Activated naive CD4-positive, alpha-beta T cell treated with anti-CD3 and anti-CD28 coated beads for 36 hours (primary cell): ENCODE measurements at regions of chr6 and their contacts with region 1.

Region 1: DNA sequence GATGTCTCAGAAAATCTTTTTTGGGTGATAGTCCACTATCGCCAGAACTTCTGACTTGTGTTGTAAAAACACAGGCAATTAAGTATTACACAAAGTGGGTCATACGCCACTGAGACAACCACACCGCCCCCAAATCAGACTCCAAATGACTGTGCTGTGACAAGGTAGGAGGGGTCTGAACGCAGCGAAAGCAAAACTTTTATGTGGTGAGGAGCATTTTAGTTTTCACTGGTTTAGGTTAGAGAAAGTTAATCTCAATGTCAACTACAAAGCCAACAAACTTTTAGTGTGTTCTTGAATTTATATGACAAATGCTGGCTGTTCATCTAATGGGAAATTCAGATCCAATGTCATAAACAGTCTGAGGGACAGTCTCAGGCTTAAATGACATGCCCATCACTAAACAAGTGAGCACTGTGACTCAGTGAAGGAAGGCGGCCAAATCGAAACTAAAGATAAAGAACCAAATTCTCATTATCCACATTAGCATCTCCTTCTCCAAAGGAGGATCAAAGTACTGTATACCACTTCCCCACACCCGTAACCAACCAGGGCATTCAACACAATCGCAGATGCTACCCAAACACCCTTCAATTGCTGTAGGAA is 186.7 kb downstream of the GJA10 start:
- DNase-seq: peak; percentile 94
- H3K4me3 Mint-ChIP-seq: peak overlapping the region; percentile 89
- H3K27ac Mint-ChIP-seq: peak overlapping the region; percentile 94
- H3K4me1 Mint-ChIP-seq: peaks cover 88% of the 10 kb centered on the region
- H3K27me3 Mint-ChIP-seq: no peaks in the 10 kb centered on the region

Region 2: GRCh38 chr6:89895276-89895874 is 185.6 kb before region 1 on chr6:
- CTCF ChIA-PET with region 1: no interaction called
- intact Hi-C with region 1: no loop called
- DNase-seq: peak; percentile 27
- H3K4me3 Mint-ChIP-seq: no peak overlapping the region
- H3K27ac Mint-ChIP-seq: no peak overlapping the region
- H3K4me1 Mint-ChIP-seq: no peaks in the 10 kb centered on the region
- H3K27me3 Mint-ChIP-seq: peaks cover 33% of the 10 kb centered on the region

Region 3: DNA sequence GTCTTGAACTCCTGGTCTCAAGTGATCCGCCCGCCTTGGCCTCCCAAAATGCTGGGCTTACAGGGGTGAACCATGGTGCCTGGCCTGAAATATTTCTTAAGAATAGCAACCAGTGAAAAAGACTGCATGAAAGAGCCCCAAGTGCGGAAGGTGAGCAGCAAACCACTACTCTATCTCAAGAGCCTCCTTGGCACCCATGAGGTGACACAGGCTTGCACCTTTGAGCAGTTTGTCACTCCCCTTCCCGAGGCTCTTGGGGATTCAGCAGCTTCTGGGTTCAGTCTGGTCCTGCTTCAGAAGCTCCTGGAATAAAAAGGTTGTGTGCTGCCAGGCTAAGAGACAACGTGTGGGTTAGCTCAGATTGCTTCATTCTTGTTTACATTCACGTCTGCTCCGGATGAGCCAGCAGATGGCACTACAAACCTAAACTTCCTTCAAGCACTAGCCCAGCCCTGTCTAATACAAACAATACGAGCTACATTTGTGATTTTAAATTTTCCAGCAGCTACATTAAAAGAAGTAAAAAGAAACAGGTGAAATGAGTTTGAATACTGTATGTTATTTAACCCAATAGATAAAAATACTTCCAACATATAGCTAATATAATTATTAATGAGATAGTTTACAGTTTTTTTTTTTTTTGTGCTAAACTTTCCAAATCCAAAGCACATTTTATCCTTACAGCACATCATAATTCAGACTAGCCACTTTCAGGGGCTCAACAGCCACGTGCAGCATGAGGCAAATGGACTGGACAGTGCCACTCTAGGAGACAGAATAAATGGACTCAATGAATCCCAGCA is 140.6 kb before region 1 on chr6:
- CTCF ChIA-PET with region 1: interaction called, 11 read pairs
- intact Hi-C with region 1: loop called (anchors 1 kb)
- DNase-seq: peak; percentile 86
- H3K4me3 Mint-ChIP-seq: no peak overlapping the region
- H3K27ac Mint-ChIP-seq: peak overlapping the region; percentile 74
- H3K4me1 Mint-ChIP-seq: peaks cover 70% of the 10 kb centered on the region
- H3K27me3 Mint-ChIP-seq: no peaks in the 10 kb centered on the region

Region 4: GRCh38 chr6:89989742-89990141 is 91.2 kb before region 1 on chr6:
- CTCF ChIA-PET with region 1: no interaction called
- intact Hi-C with region 1: no loop called
- DNase-seq: no peak
- H3K4me3 Mint-ChIP-seq: no peak overlapping the region
- H3K27ac Mint-ChIP-seq: peak overlapping the region; percentile 10
- H3K4me1 Mint-ChIP-seq: peaks cover 91% of the 10 kb centered on the region
- H3K27me3 Mint-ChIP-seq: no peaks in the 10 kb centered on the region

Region 5: GRCh38 chr6:90049295-90049694 is 31.7 kb before region 1 on chr6:
- CTCF ChIA-PET with region 1: no interaction called
- intact Hi-C with region 1: loop called (anchors 1 kb)
- DNase-seq: no peak
- H3K4me3 Mint-ChIP-seq: no peak overlapping the region
- H3K27ac Mint-ChIP-seq: peak overlapping the region; percentile 86
- H3K4me1 Mint-ChIP-seq: peaks cover 59% of the 10 kb centered on the region
- H3K27me3 Mint-ChIP-seq: no peaks in the 10 kb centered on the region

Region 6: DNA sequence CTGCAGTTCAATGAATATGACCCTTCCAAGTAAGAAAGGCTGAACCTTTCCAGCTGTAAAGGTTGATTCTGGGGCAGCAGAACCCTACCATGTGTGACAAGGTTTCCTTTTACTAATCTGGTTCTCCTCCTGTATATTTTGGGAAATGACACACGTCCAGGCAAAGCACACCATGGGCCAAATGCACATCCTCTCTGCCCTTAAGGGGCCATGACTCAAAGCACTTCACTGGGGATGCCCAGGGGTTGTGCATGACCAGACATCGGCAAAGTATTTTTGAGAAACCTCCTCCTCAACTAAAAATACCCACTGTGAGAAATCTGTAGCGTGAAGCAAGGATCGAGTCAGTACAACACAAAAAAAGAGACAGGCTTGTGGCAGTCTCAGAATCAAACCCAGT is 41.0 kb after region 1 on chr6:
- CTCF ChIA-PET with region 1: interaction called, 3 read pairs
- intact Hi-C with region 1: loop called (anchors 1 kb)
- DNase-seq: peak; percentile 82
- H3K4me3 Mint-ChIP-seq: no peak overlapping the region
- H3K27ac Mint-ChIP-seq: peak overlapping the region; percentile 88
- H3K4me1 Mint-ChIP-seq: peaks cover 89% of the 10 kb centered on the region
- H3K27me3 Mint-ChIP-seq: no peaks in the 10 kb centered on the region

Region 7: GRCh38 chr6:90251295-90251992 is 170.5 kb after region 1 on chr6:
- CTCF ChIA-PET with region 1: no interaction called
- intact Hi-C with region 1: loop called (anchors 1 kb)
- DNase-seq: no peak
- H3K4me3 Mint-ChIP-seq: peak overlapping the region; percentile 8
- H3K27ac Mint-ChIP-seq: peak overlapping the region; percentile 98
- H3K4me1 Mint-ChIP-seq: peaks cover 90% of the 10 kb centered on the region
- H3K27me3 Mint-ChIP-seq: no peaks in the 10 kb centered on the region

Region 8: GRCh38 chr6:90393232-90393884 is 312.4 kb after region 1 on chr6:
- CTCF ChIA-PET with region 1: no interaction called
- intact Hi-C with region 1: loop called (anchors 1 kb)
- DNase-seq: peak; percentile 92
- H3K4me3 Mint-ChIP-seq: no peak overlapping the region
- H3K27ac Mint-ChIP-seq: peak overlapping the region; percentile 70
- H3K4me1 Mint-ChIP-seq: peaks cover 78% of the 10 kb centered on the region
- H3K27me3 Mint-ChIP-seq: no peaks in the 10 kb centered on the region

Region 9: GRCh38 chr6:90478789-90479602 is 398.0 kb after region 1 on chr6:
- CTCF ChIA-PET with region 1: interaction called, 3 read pairs
- intact Hi-C with region 1: loop called (anchors 1 kb)
- DNase-seq: peak; percentile 94
- H3K4me3 Mint-ChIP-seq: no peak overlapping the region
- H3K27ac Mint-ChIP-seq: peak overlapping the region; percentile 81
- H3K4me1 Mint-ChIP-seq: peaks cover 60% of the 10 kb centered on the region
- H3K27me3 Mint-ChIP-seq: no peaks in the 10 kb centered on the region

Region 10: GRCh38 chr6:91575032-91575431 is 1494.1 kb after region 1 on chr6:
- CTCF ChIA-PET with region 1: no interaction called
- intact Hi-C with region 1: no loop called
- DNase-seq: no peak
- H3K4me3 Mint-ChIP-seq: no peak overlapping the region
- H3K27ac Mint-ChIP-seq: no peak overlapping the region
- H3K4me1 Mint-ChIP-seq: no peaks in the 10 kb centered on the region
- H3K27me3 Mint-ChIP-seq: no peaks in the 10 kb centered on the region